Activated CD4-positive, alpha-beta T cell treated with anti-CD3 and anti-CD28 coated beads, Interleukin-2, amount 10 ng/mL, durations not matched to agents 24 days and 14 days (primary cell): ENCODE measurements at regions of chr17 and their contacts with region 1.

Region 1: DNA sequence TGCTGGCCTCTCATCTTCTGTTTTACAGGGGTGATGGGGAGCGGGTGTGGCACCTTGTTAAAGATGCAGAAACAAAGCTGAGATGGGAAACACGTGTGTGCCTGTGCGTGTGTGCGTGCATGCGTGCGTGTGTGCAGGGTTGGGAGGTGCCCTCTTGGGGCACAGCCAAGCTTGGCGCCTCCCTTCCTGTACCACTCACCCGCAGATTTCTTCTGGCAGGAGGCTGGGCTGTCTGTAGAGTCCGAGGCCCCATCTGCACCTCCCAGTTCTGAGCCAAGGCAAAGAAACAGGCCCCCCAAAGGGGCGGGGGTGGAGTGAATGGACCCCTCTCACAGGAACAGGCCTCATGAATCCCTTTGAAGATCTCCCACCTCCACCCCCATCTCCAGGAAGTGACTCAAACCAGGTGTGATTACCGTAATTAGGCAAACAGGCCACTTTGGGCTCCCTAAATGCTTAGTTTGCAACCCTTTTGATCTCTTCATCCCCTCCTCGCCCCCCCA is 20.9 kb downstream of the TNS4 start:
- DNase-seq: peak; percentile 93
- H3K4me3 Mint-ChIP-seq: peak overlapping the region; percentile 79
- H3K27ac Mint-ChIP-seq: peak overlapping the region; percentile 95
- H3K4me1 Mint-ChIP-seq: peaks cover 75% of the 10 kb centered on the region
- H3K27me3 Mint-ChIP-seq: no peaks in the 10 kb centered on the region

Region 2: DNA sequence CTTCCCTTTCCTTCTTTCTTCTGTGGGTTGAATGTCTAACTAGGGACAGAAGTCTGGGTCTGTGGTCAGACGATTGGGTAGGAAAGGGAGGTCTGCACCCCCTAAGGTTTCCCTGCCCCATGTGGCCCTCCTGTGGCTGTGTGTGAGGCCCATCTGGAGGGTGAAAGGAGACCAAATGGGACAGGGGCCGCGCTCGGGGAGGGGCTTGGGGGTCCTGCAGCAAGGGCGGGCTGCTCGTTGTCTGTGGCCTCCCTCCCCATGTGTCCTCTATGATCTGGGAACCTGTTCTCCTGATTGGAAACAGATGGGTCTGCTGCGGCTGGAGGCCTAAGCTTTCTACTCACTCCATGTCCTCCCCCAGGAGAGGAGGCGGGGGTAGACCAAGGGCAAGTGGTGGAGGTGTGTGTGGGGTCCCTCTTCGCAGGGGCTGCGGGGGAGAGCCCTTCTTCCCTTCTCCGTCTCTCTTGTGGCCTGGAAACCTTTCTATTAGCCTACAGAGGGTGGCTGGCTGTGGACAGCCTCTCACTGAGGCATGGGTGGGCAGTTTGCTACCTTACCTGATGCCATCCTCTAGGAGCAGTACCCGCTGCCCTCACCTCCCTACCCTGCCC is 18.7 kb before region 1 on chr17:
- intact Hi-C with region 1: no loop called
- DNase-seq: no peak
- H3K4me3 Mint-ChIP-seq: no peak overlapping the region
- H3K27ac Mint-ChIP-seq: peak overlapping the region; percentile 15
- H3K4me1 Mint-ChIP-seq: peaks cover 9% of the 10 kb centered on the region
- H3K27me3 Mint-ChIP-seq: peaks cover 4% of the 10 kb centered on the region

Region 3: DNA sequence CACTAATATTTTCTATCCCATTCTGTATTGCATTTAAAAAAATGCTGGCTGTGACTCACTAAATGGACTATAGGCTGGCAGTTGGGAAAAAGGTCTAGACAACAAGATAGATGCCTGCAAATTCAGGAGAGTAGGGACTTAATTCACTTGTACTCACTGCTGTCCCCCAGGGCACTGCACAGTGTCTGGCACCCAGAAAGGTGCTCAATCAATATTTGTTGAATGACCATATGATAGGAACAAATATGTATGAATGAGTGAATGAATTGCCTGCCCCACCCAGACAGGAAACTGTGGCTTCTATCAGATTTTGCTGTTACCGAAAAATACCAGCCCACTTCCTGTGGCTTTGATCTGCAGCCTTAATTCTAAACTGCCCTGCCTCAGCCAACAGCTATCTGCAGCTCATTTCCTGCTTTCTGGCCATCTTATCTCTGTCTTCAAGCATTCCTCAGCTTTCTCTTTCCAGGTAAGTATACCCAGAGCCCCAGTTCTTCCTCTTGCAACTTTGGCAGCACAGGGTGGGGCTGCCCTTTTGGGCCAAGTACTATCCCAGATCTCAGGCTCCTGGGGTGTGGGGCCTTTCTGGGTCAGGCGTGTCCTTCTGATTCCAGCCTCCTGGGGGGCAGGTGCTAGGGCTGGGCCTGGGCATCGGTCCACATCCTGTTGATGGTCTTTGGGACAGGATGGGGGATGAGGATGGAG is 36.2 kb after region 1 on chr17:
- intact Hi-C with region 1: loop called (anchors 1 kb)
- DNase-seq: peak; percentile 94
- H3K4me3 Mint-ChIP-seq: peak overlapping the region; percentile 87
- H3K27ac Mint-ChIP-seq: peak overlapping the region; percentile 94
- H3K4me1 Mint-ChIP-seq: peaks cover 71% of the 10 kb centered on the region
- H3K27me3 Mint-ChIP-seq: no peaks in the 10 kb centered on the region

Region 4: DNA sequence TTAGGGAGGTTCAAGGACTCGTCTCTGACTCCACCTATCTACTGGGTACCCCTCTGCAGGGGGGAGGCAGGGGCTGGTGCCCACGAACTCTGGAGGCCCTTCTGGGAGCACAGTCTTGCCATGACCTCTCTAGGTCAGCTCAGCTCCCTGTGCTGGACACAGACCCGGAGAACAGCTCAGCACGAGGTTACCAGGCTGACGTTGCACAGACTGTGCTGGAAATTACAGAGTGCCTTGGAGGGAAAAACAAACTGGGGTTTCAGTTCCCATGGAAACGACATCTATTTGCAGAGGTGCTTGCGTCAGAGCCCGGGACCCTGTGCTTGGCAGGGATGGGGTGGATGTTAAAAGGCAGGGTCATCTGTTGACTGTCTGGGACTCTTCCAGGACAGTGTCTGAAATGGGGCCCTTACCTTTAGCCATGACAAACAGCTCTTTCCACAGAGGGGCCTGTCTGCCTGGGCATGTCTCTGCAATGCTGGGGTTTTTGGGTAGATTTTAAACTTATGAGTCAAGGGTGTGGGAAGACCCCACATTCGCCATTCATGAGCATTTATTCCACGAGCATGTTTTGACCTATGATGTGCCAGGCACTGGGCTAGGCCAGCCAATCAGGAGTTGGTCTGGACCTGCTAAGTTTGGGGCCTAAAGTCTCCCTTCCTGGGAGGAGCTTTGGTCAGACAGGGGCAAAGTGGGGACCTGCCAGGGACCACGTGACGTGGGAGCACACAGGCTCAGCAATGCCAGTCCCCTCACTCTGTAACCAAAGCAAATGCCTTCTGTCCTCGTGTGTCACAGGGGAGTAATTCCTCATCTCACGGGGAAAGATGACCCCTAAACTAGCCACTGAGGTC is 62.2 kb after region 1 on chr17:
- intact Hi-C with region 1: loop called (anchors 1 kb)
- DNase-seq: peak; percentile 83
- H3K4me3 Mint-ChIP-seq: peak overlapping the region; percentile 66
- H3K27ac Mint-ChIP-seq: peak overlapping the region; percentile 92
- H3K4me1 Mint-ChIP-seq: peaks cover 80% of the 10 kb centered on the region
- H3K27me3 Mint-ChIP-seq: no peaks in the 10 kb centered on the region